Mammary epithelial cell (primary cell): ENCODE measurements at regions of chr13 and their contacts with region 1.

Region 1: GRCh38 chr13:20465218-20465879 is 60.3 kb downstream of the CRYL1 start:
- DNase-seq: peak; percentile 28
- H3K4me3 ChIP-seq: no peak overlapping the region
- H3K27ac ChIP-seq: no peak overlapping the region
- H3K4me1 ChIP-seq: peaks cover 3% of the 10 kb centered on the region
- H3K27me3 ChIP-seq: no peaks in the 10 kb centered on the region
- CTCF ChIP-seq: no peak

Region 2: DNA sequence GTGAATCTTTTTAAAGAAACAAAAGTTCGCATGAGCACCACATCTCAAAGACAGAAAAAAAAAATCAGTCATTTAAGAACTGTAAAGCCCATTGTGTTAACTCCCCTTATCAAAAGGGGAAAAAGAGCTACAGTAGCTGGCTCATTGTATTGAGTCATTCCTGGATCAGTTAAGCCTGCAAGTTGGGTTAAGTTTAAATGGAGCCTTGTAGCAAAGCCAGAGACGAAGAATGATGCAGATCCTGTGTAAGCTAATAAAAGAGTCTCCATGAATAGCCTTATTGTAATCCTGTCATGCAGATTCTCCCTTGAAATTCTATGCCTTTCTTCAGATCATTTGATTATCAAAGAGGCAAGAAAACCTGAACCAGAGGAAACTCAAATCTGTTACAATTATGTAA is 23.5 kb before region 1 on chr13:
- CTCF ChIA-PET with region 1: no interaction called
- dilution Hi-C with region 1: no loop called
- in situ Hi-C with region 1: no loop called
- intact Hi-C with region 1: loop called (anchors 1 kb)
- DNase-seq: peak; percentile 89
- H3K4me3 ChIP-seq: no peak overlapping the region
- H3K27ac ChIP-seq: peak overlapping the region; percentile 22
- H3K4me1 ChIP-seq: peaks cover 20% of the 10 kb centered on the region
- H3K27me3 ChIP-seq: no peaks in the 10 kb centered on the region
- CTCF ChIP-seq: no peak